Common myeloid progenitor, CD34-positive (primary cell): ENCODE measurements at regions of chr11 and their contacts with region 1.

Region 1: DNA sequence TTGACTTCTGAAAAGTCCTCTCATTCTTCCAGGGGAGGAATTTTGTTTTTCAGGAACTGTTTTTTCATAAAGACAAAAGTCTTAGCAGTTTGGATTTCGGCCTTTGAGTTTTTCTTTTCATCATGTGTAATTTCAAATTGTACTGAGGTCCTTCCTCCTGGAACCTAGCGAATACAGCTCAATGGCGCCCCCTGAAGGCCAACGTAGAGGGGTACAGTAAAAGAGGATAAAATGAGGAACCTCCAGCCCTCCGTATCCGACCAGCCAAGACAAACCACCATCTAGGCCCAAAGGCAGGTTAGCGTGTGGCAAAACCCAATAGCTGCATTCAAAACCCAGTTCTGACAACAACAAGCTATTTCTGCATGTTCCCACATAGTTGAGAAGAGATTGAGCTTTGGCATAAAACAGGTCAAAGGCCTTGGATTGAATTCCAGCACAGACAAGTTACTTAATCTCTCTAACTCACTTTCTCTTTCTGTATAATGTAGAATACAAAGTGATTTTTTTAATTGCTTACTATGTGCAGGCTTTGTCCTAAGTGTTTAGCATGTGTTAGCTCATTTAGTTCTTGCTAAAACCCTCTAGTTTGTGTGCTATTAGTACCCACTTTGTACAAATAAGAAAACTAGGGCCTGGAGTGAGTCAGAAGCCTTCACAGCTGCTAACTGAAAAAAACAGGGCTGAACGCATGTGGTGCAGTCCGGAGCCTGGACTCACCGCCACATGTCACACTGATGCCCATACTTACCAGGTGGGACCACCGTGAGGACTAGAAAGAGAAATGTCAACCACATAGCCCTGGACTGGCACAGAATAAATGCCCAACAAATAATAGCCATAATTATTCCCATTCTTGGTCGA is 43.2 kb upstream of the ETS1 start:
- DNase-seq: peak; percentile 94 to 98 (median 96)
- H3K4me3 ChIP-seq: peak overlapping the region in 1 of 7 experiments; percentile 43
- H3K27ac ChIP-seq: no peak overlapping the region
- H3K4me1 ChIP-seq: peaks cover 5 to 27% (median 12%) of the 10 kb centered on the region in 4 experiments
- H3K27me3 ChIP-seq: no peaks in the 10 kb centered on the region

Region 2: GRCh38 chr11:128165572-128165971 is 465.0 kb before region 1 on chr11:
- CTCF ChIA-PET with region 1: interaction called, 22 read pairs
- POLR2A ChIA-PET with region 1: no interaction called
- DNase-seq: peak in 2 of 3 donors; percentile 22 to 41
- H3K4me3 ChIP-seq: no peak overlapping the region
- H3K27ac ChIP-seq: no peak overlapping the region
- H3K4me1 ChIP-seq: peaks cover 3 to 18% (median 11%) of the 10 kb centered on the region in 4 experiments
- H3K27me3 ChIP-seq: no peaks in the 10 kb centered on the region

Region 3: GRCh38 chr11:128195057-128195751 is 435.4 kb before region 1 on chr11:
- CTCF ChIA-PET with region 1: interaction called, 25 read pairs
- POLR2A ChIA-PET with region 1: interaction called, 6 read pairs
- DNase-seq: peak; percentile 95 to 99 (median 99)
- H3K4me3 ChIP-seq: peak overlapping the region in 3 of 7 experiments; percentile 9 to 32 (median 31)
- H3K27ac ChIP-seq: peak overlapping the region; percentile 43 to 68
- H3K4me1 ChIP-seq: peaks cover 28 to 54% (median 37%) of the 10 kb centered on the region in 4 experiments
- H3K27me3 ChIP-seq: no peaks in the 10 kb centered on the region

Region 4: GRCh38 chr11:128552783-128553661 is 77.6 kb before region 1 on chr11:
- CTCF ChIA-PET with region 1: interaction called, 11 read pairs
- POLR2A ChIA-PET with region 1: interaction called, 5 read pairs
- DNase-seq: peak in 2 of 3 donors; percentile 61 to 67
- H3K4me3 ChIP-seq: no peak overlapping the region
- H3K27ac ChIP-seq: no peak overlapping the region
- H3K4me1 ChIP-seq: peaks cover 29 to 52% (median 43%) of the 10 kb centered on the region in 4 experiments
- H3K27me3 ChIP-seq: no peaks in the 10 kb centered on the region

Region 5: DNA sequence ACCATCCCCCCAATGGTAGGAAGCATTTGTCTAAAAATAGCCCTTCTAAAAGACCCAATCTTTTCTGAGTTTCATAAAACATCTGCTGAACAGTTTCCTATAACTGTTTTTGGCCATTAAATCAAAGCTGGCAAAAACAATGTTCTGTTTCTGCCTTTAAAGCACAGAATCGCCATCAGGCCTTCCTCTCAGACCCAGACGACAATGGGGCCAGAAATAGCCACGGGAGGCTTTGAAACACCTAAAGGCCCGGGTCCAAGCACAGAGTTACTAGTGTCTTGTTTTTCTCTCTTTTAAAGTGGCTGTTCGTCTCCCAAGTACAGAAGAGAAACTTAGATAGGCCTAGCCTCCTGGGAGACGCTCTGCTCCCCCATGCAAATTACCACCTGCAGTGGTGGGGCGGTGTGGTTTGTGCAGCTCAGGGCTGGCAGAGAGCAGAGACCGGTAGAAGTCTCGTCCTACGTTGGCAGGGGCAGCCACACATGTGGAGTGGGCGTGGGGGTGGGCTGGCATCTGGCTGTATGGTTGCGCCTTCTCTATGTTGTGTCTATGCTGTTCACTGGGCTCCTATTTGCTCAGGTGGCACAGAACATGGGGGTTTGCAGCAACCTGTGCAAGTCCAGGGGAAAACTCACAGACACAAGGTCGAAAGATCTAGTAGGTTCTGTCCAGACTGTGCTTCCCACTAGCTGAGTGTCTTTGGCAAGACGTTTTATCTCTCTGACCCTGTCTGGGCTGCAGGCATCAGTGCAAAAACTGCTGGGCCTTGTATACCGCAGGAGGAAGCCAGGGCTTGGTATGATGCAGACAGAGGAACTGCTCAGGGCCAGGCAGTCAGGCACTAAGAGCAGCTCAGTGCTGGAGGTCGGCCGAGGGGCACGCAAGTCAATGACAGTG is 19.6 kb before region 1 on chr11:
- CTCF ChIA-PET with region 1: interaction called, 23 read pairs
- POLR2A ChIA-PET with region 1: interaction called, 4 read pairs
- DNase-seq: peak; percentile 61 to 91 (median 85)
- H3K4me3 ChIP-seq: peak overlapping the region in 3 of 7 experiments; percentile 21 to 37 (median 33)
- H3K27ac ChIP-seq: peak overlapping the region; percentile 13 to 46
- H3K4me1 ChIP-seq: peaks cover 15 to 43% (median 33%) of the 10 kb centered on the region in 4 experiments
- H3K27me3 ChIP-seq: no peaks in the 10 kb centered on the region

Region 6: GRCh38 chr11:128678024-128678423 is 47.4 kb after region 1 on chr11:
- CTCF ChIA-PET with region 1: interaction called, 11 read pairs
- POLR2A ChIA-PET with region 1: no interaction called
- DNase-seq: peak; percentile 95 to 99 (median 98)
- H3K4me3 ChIP-seq: peak overlapping the region in 1 of 7 experiments; percentile 26
- H3K27ac ChIP-seq: peak overlapping the region; percentile 29 to 60
- H3K4me1 ChIP-seq: peaks cover 25 to 67% (median 48%) of the 10 kb centered on the region in 4 experiments
- H3K27me3 ChIP-seq: no peaks in the 10 kb centered on the region

Region 7: DNA sequence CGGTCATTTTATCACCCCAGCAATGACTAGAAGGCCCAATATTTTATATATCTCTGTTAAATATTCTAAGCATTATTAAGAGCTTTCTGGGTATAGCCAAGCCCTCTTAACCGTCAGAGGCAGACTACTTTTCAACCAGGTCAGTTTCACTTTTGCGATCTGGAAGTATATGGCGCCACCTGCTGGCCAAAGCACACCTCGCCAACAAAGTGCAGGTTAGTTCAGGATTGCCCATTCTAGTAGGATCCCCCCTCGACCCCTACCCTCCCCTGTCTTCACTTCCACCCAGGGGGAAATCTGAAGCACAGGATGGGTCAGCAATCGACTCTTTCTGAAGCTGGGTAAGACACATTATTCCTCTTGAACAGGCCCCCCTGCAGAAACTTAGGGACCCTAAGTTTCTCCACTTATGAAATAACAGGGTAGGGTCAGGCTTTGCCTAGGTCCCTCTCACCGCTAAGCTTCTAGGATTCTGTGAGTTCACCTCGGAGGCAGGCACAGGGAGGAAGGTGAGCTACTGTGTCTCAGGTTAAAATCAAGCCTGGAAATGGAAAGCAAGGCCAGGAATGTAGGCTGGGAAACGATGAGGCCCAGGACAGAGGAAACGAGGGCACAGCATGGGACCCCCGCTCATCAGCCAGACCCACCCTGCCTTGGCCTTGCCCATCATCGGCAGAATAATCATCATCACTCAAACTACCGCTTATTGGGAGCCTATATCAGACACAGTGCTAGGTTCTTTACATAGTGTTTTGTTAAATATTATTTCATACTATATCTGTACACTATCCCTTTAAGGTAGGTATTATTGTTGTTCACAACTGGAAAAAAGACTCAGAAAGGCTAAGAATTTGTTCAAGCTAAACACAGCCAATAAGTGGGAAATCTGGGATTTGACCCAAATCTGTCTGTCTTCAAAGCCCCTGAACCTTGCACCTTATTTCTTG is 200.8 kb after region 1 on chr11:
- CTCF ChIA-PET with region 1: interaction called, 13 read pairs
- POLR2A ChIA-PET with region 1: no interaction called
- DNase-seq: peak; percentile 82 to 92 (median 90)
- H3K4me3 ChIP-seq: peak overlapping the region in 5 of 7 experiments; percentile 4 to 68 (median 33)
- H3K27ac ChIP-seq: peak overlapping the region in 1 of 2 experiments; percentile 14
- H3K4me1 ChIP-seq: peaks cover 11 to 33% (median 12%) of the 10 kb centered on the region in 4 experiments
- H3K27me3 ChIP-seq: no peaks in the 10 kb centered on the region

Region 8: DNA sequence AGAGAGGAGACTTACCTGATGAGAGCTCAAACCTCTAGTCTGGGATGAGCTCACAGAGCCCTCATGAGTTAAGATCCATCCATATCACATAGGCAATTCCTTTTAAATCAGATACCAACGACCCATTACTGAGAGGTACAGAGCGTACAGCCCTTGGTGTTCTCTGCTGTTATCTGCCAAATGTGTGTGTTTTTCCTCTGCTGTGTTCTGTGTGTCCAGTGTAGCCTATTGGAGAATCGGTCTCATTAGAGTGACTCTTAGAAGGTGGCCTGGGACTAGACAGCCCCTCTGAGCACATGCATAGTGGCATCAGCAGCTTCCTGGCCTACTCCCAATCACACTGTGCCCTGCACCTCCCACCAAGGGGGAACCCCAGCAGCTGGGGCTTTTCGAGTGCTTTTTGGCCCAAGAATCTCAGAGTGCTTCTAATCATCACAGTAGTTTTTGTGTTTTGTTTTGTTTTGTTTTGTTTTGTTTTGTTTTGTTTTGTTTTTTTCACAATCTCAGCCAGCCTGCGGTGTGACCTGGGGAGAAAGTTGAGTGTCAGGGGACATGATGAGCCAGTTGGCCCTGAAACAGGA is 286.6 kb after region 1 on chr11:
- CTCF ChIA-PET with region 1: no interaction called
- POLR2A ChIA-PET with region 1: no interaction called
- DNase-seq: peak in 1 of 3 donors; percentile 39
- H3K4me3 ChIP-seq: no peak overlapping the region
- H3K27ac ChIP-seq: no peak overlapping the region
- H3K4me1 ChIP-seq: peaks cover 0 to 34% (median 20%) of the 10 kb centered on the region in 4 experiments
- H3K27me3 ChIP-seq: peaks cover 0 to 5% (median 0%) of the 10 kb centered on the region in 5 experiments